H1 (cell line): ENCODE measurements at regions of chr6 and their contacts with region 1.

Region 1: GRCh38 chr6:132279592-132280139 is 121.6 kb downstream of the MOXD1 start:
- DNase-seq: peak; percentile 15 to 80
- H3K4me3 ChIP-seq: peak overlapping the region; percentile 18 to 59 (median 44); a peak in 7 of 8 replicates
- H3K27ac ChIP-seq: no peak overlapping the region
- H3K4me1 ChIP-seq: no peaks in the 10 kb centered on the region
- H3K27me3 ChIP-seq: no peaks in the 10 kb centered on the region
- CTCF ChIP-seq: peak; percentile 61 to 90 (median 74)
- EP300 ChIP-seq: no peak
- POLR2A ChIP-seq: no peak
- RAD21 ChIP-seq: peak; percentile 84

Region 2: GRCh38 chr6:132227904-132228303 is 51.8 kb before region 1 on chr6:
- CTCF ChIA-PET with region 1: no interaction called
- POLR2A ChIA-PET with region 1: no interaction called
- DNase-seq: no peak
- H3K4me3 ChIP-seq: no peak overlapping the region
- H3K27ac ChIP-seq: no peak overlapping the region
- H3K4me1 ChIP-seq: peaks cover 0 to 2% (median 0%) of the 10 kb centered on the region in 4 experiments; a peak in 1 of 7 replicates
- H3K27me3 ChIP-seq: no peaks in the 10 kb centered on the region
- CTCF ChIP-seq: no peak
- EP300 ChIP-seq: no peak
- POLR2A ChIP-seq: no peak
- RAD21 ChIP-seq: no peak

Region 3: GRCh38 chr6:132247381-132248159 is 32.1 kb before region 1 on chr6:
- CTCF ChIA-PET with region 1: interaction called, 11 read pairs
- POLR2A ChIA-PET with region 1: no interaction called
- DNase-seq: no peak
- H3K4me3 ChIP-seq: no peak overlapping the region
- H3K27ac ChIP-seq: no peak overlapping the region
- H3K4me1 ChIP-seq: peaks cover 0 to 4% (median 0%) of the 10 kb centered on the region in 4 experiments; a peak in 2 of 7 replicates
- H3K27me3 ChIP-seq: no peaks in the 10 kb centered on the region
- CTCF ChIP-seq: peak in 1 of 3 experiments; percentile 8; a peak in 1 of 4 replicates
- EP300 ChIP-seq: no peak
- POLR2A ChIP-seq: no peak
- RAD21 ChIP-seq: no peak

Region 4: GRCh38 chr6:132259070-132259469 is 20.6 kb before region 1 on chr6:
- CTCF ChIA-PET with region 1: interaction called, 19 read pairs
- POLR2A ChIA-PET with region 1: no interaction called
- DNase-seq: no peak
- H3K4me3 ChIP-seq: no peak overlapping the region
- H3K27ac ChIP-seq: no peak overlapping the region
- H3K4me1 ChIP-seq: no peaks in the 10 kb centered on the region
- H3K27me3 ChIP-seq: no peaks in the 10 kb centered on the region
- CTCF ChIP-seq: peak in 2 of 3 experiments; percentile 27 to 33; a peak in 2 of 4 replicates
- EP300 ChIP-seq: no peak
- POLR2A ChIP-seq: no peak
- RAD21 ChIP-seq: peak; percentile 48 to 59

Region 5: DNA sequence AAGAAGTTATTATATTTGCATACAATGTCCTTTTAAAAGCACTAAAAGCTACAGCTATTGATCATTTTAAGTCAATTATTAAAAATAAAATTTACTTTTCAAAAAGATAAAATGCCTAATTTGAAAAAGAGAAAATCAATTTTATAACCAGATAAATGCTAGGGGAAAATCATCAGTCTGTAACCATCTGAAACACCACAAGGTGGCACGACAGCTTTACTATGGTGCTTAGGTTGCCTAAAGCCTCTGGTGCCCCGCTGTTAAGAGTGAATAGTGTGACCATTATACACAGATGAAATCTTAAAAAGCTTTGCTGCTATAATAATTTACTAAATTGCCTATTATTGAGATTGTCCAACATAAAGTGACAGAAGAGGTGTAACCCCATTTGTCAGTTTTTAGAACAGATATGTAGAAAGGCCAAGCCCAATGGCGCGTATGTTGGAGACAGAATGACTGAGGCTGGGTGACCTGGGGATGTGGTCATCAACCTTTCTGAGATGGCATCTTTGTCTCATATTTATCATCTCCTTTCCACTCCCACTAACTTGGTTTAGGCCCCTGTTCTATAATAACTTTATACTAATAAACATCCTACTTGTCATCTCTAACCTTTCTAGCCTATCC is 20.8 kb after region 1 on chr6:
- CTCF ChIA-PET with region 1: interaction called, 280 read pairs
- POLR2A ChIA-PET with region 1: interaction called, 3 read pairs
- DNase-seq: no peak
- H3K4me3 ChIP-seq: no peak overlapping the region
- H3K27ac ChIP-seq: no peak overlapping the region
- H3K4me1 ChIP-seq: no peaks in the 10 kb centered on the region
- H3K27me3 ChIP-seq: no peaks in the 10 kb centered on the region
- CTCF ChIP-seq: peak in 2 of 3 experiments; percentile 61 to 81; a peak in 3 of 4 replicates
- EP300 ChIP-seq: no peak
- POLR2A ChIP-seq: no peak
- RAD21 ChIP-seq: peak; percentile 90 to 93

Region 6: DNA sequence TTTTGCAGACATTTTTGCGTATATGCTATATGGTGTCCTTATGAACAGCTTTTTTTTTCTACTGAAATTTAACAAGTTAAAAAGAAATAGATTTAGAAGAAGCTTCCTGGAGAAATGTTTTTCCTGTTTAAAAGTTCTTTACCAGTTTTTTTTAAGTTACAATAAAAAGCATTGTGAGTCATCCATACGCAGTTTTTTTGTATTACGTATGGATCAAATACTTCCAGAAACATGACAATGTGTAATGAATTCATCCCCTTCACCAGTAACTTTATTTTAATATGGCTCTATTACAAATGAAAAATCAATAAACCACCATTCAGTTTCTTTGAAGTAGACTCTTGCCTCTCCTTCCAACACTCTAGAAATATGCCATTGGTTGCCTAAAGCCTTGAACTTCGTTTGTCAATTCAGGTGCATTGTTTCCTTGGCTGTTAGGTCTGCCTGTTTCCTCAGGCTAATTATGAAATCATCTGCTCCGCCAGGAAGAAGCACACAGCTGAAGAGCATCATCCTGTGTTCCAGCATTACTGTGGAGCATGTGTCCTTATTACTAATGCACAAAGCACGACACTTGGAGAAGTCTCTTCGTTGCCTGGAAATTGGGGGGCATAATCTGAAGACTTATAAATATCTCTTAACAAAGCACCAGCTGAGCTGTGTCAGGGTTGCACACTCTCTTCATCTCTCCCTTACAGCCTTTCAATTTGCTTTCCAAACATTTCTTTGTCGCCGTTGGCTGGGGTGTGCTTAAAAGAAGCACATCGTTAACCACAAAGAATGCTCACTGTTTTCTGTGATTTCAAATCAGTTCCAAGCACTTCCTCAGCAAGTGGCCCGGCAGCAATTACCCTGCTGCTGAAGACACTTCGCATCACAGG is 112.0 kb after region 1 on chr6:
- CTCF ChIA-PET with region 1: interaction called, 24 read pairs
- POLR2A ChIA-PET with region 1: no interaction called
- DNase-seq: no peak
- H3K4me3 ChIP-seq: no peak overlapping the region
- H3K27ac ChIP-seq: no peak overlapping the region
- H3K4me1 ChIP-seq: peaks cover 4 to 11% (median 10%) of the 10 kb centered on the region in 4 experiments; a peak in 4 of 7 replicates
- H3K27me3 ChIP-seq: no peaks in the 10 kb centered on the region
- CTCF ChIP-seq: no peak
- EP300 ChIP-seq: no peak
- POLR2A ChIP-seq: no peak
- RAD21 ChIP-seq: no peak

Region 7: GRCh38 chr6:132483779-132484679 is 204.4 kb after region 1 on chr6:
- CTCF ChIA-PET with region 1: interaction called, 109 read pairs
- POLR2A ChIA-PET with region 1: no interaction called
- DNase-seq: no peak
- H3K4me3 ChIP-seq: no peak overlapping the region
- H3K27ac ChIP-seq: no peak overlapping the region
- H3K4me1 ChIP-seq: no peaks in the 10 kb centered on the region
- H3K27me3 ChIP-seq: no peaks in the 10 kb centered on the region
- CTCF ChIP-seq: peak in 2 of 3 experiments; percentile 46 to 64; a peak in 2 of 4 replicates
- EP300 ChIP-seq: no peak
- POLR2A ChIP-seq: no peak
- RAD21 ChIP-seq: peak; percentile 86 to 89

Region 8: DNA sequence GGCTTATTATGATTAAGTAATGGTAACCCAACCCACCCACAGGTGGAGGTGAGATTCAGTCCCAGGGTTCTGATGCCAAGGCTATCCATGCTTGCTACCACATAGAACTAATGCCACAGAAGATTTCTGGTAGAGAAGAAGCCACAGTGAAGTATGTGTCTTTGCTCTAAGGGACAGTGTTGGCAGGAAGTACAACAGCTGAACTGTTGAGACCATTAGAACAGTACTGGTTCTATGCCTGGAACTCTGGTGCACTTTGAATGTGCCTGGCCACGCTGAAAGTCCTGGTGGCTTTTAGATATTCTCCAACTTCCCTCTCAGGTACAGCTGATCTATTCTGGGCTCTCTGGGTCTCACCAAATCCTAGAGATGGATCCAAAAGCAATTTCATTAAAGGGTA is 225.5 kb after region 1 on chr6:
- CTCF ChIA-PET with region 1: no interaction called
- POLR2A ChIA-PET with region 1: no interaction called
- DNase-seq: no peak
- H3K4me3 ChIP-seq: no peak overlapping the region
- H3K27ac ChIP-seq: no peak overlapping the region
- H3K4me1 ChIP-seq: no peaks in the 10 kb centered on the region
- H3K27me3 ChIP-seq: no peaks in the 10 kb centered on the region
- CTCF ChIP-seq: no peak
- EP300 ChIP-seq: no peak
- POLR2A ChIP-seq: no peak
- RAD21 ChIP-seq: no peak

Region 9: GRCh38 chr6:132648356-132649227 is 368.9 kb after region 1 on chr6:
- CTCF ChIA-PET with region 1: no interaction called
- POLR2A ChIA-PET with region 1: no interaction called
- DNase-seq: no peak
- H3K4me3 ChIP-seq: no peak overlapping the region
- H3K27ac ChIP-seq: no peak overlapping the region
- H3K4me1 ChIP-seq: no peaks in the 10 kb centered on the region
- H3K27me3 ChIP-seq: no peaks in the 10 kb centered on the region
- CTCF ChIP-seq: no peak
- EP300 ChIP-seq: no peak
- POLR2A ChIP-seq: no peak
- RAD21 ChIP-seq: no peak

Region 10: GRCh38 chr6:132768051-132768517 is 488.4 kb after region 1 on chr6:
- CTCF ChIA-PET with region 1: interaction called, 12 read pairs
- POLR2A ChIA-PET with region 1: no interaction called
- DNase-seq: peak; percentile 31 to 82
- H3K4me3 ChIP-seq: peak overlapping the region; percentile 16 to 54 (median 42); a peak in 7 of 8 replicates
- H3K27ac ChIP-seq: no peak overlapping the region
- H3K4me1 ChIP-seq: no peaks in the 10 kb centered on the region
- H3K27me3 ChIP-seq: no peaks in the 10 kb centered on the region
- CTCF ChIP-seq: peak; percentile 74 to 83 (median 79); a peak in 3 of 4 replicates
- EP300 ChIP-seq: no peak
- POLR2A ChIP-seq: no peak
- RAD21 ChIP-seq: peak; percentile 75 to 82